ENCODE measurements at regions of chr11 and their contacts with region 1.

Region 1: DNA sequence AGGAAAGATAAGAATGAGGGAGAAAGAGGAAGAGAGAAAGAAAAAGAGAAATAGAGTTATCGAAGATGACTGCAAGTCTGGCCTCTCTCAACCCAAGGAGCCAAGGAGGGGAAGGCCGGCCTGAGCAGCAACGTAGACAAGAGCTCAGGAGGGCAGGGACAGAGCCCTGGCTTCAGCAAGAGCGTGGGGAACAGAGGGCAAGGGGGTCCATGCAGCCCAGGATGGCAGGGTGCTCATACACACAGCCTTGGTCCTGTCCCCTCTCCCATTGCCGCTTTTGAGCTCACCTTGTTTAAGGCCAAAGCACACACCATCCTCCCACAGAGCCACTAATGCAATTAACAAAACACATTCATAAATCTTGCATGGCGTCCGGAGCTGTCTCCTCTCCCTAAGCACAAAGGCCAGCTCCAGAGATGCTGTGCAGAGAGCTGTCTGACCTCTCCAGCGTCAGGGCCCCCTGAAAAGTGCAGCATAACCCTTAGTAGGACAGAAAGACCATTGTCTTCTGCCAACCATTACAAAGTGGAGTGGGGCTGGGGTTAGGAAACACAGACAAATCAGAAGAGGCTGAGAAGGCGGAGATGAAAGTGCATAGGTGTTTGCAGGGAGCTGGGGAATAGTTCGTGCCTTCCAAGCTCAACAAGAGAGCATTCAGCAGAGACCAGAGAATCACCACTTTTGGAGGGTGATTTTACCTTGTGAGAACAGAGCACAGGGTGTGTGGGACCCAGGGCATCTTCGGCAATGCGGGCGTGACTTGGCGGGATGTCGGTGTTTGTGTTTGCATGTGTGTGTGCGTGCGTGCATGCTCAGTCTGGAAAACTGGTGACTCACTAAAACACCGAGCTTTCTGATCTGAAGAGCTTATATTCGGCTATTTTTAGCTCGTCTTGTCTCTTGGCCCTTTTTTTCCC is 28.2 kb upstream of the JAM3 start:
- DNase-seq: no peak
- H3K4me3 ChIP-seq: no peak overlapping the region
- H3K27ac ChIP-seq: no peak overlapping the region
- H3K4me1 ChIP-seq: no peaks in the 10 kb centered on the region
- CTCF ChIP-seq: no peak

Region 2: DNA sequence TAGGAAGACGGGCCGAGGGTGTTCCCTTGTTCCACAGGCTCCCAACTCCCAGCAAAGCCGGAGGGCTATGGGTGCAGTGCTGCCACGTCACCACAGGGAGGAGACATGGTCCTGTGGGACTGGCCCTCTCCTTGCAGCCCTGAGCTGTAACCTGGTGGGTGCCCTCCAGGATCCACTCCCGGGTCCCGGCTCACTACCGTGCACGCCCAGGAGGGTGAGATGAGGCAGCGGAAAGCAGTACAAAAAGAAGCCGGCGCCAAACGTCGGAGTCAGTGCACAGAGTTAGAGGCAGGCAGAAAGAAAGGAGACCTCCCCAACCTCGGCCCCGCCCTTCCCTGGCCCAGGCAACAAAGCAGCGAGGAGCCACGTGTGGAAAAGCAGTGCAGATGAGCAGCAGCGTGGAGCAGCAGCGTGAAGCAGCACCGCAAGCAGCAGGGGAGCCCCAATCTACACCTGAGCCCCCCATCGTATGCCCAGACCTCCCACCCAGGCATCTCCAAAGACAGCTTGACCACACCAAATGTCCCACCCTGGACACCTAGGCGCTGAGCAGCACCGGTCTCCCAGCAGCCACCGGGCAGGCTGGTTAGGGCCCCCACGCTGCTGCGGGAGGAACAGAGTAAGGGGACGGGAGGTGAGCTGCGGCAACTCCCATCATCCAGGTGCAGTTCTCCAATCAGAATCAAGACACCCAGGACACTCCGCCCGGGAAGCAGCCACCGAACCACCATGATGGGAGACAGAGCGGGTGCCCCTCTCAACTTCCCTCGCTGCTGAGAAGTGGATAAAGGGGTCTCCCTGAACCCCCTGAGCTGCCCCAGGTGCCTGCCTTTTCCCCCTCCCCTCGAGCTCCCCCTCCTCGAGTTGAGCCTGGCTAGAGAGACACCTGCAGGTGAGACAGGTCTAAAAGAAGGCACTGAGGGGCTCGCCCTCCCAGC is 112.7 kb before region 1 on chr11:
- CTCF ChIA-PET with region 1: interaction called, 6 read pairs
- POLR2A ChIA-PET with region 1: no interaction called
- intact Hi-C with region 1: loop called (anchors 5 kb)
- DNase-seq: peak; percentile 53
- H3K4me3 ChIP-seq: no peak overlapping the region
- H3K27ac ChIP-seq: no peak overlapping the region
- H3K4me1 ChIP-seq: no peaks in the 10 kb centered on the region
- CTCF ChIP-seq: peak; percentile 79